Heart left ventricle (tissue), 16 donors: ENCODE measurements at regions of chr16 and their contacts with region 1.

Region 1: GRCh38 chr16:7209598-7209997 is 123.0 kb upstream of the RBFOX1 start:
- DNase-seq: no peak
- ATAC-seq: no peak
- H3K4me3 ChIP-seq: no peak overlapping the region
- H3K27ac ChIP-seq: no peak overlapping the region
- H3K4me1 ChIP-seq: no peaks in the 10 kb centered on the region
- H3K27me3 ChIP-seq: no peaks in the 10 kb centered on the region
- CTCF ChIP-seq: no peak
- POLR2A ChIP-seq: no peak

Region 2: DNA sequence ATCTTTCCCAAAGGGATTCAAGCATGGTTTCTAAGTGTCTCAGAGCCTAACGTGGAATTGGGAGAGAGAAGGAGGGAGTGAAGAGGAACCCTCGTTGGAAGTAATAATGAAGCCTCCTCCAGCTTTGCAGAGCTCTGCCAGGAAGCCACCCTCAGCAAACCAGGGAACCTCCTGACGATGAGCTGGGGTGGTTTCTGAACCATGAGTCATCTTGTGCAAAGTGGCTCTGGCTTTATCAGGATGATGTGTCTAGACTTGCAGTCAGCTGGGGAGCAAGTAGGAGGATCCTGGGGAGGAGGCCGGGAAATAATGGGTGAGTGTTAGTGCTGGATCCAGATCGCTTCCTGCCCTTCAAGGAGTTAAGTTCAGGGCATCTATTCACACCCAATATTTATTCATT is 68.7 kb before region 1 on chr16:
- intact Hi-C with region 1: loop called in 1 of 10 experiments (anchors 10 kb)
- DNase-seq: no peak
- ATAC-seq: no peak
- H3K4me3 ChIP-seq: no peak overlapping the region
- H3K27ac ChIP-seq: no peak overlapping the region
- H3K4me1 ChIP-seq: no peaks in the 10 kb centered on the region
- H3K27me3 ChIP-seq: peaks cover 0 to 5% (median 0%) of the 10 kb centered on the region in 9 donors
- CTCF ChIP-seq: no peak
- POLR2A ChIP-seq: no peak